CD4-positive, alpha-beta T cell (primary cell): ENCODE measurements at regions of chr2 and their contacts with region 1.

Region 1: DNA sequence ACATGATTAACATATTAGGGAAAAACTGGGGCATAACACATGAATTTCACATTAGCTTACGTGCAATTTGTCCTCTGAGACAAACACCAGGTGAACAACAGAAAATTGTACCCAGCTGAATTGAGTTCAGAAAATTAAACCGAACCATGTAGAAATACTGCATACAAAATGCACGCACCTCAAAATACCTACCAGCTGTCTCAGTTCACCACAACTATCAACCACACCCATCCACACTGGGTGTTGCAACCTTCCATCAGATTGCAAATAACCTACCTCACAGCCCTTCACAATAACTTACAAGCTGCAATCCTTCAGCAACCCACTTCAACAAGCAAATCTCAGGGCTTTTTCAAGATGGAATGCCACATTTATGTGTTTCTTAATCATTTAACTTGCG is 55.9 kb downstream of the UNC50 start:
- DNase-seq: peak in 11 of 14 experiments; percentile 39 to 85 (median 52)
- ATAC-seq: peak; percentile 78
- H3K4me3 ChIP-seq: peak overlapping the region; percentile 44
- H3K4me3 Mint-ChIP-seq: peak overlapping the region; percentile 87
- H3K27ac ChIP-seq: peak overlapping the region; percentile 58 to 76
- H3K27ac Mint-ChIP-seq: peak overlapping the region; percentile 92
- H3K4me1 ChIP-seq: peaks cover 44% of the 10 kb centered on the region
- H3K4me1 Mint-ChIP-seq: peaks cover 78% of the 10 kb centered on the region
- H3K27me3 ChIP-seq: no peaks in the 10 kb centered on the region
- H3K27me3 Mint-ChIP-seq: no peaks in the 10 kb centered on the region
- CTCF ChIP-seq: no peak

Region 2: GRCh38 chr2:97995734-97996624 is 668.3 kb before region 1 on chr2 and contains the start of gene TMEM131:
- CTCF ChIA-PET with region 1: no interaction called
- POLR2A ChIA-PET with region 1: no interaction called
- intact Hi-C with region 1: no loop called
- DNase-seq: peak; percentile 90 to 97 (median 96)
- ATAC-seq: peak; percentile 87
- H3K4me3 ChIP-seq: peak within 1 kb of the TSS; percentile 70
- H3K4me3 Mint-ChIP-seq: peak within 1 kb of the TSS; percentile 94
- H3K27ac ChIP-seq: peak within 1 kb of the TSS; percentile 88 to 93
- H3K27ac Mint-ChIP-seq: peak within 1 kb of the TSS; percentile 86
- H3K4me1 ChIP-seq: peaks cover 17% of the 10 kb centered on the region
- H3K4me1 Mint-ChIP-seq: peaks cover 45% of the 10 kb centered on the region
- H3K27me3 ChIP-seq: no peaks in the 10 kb centered on the region
- H3K27me3 Mint-ChIP-seq: no peaks in the 10 kb centered on the region
- CTCF ChIP-seq: no peak
- total RNA-seq, gene TMEM131: 29.2 to 33.6 TPM

Region 3: DNA sequence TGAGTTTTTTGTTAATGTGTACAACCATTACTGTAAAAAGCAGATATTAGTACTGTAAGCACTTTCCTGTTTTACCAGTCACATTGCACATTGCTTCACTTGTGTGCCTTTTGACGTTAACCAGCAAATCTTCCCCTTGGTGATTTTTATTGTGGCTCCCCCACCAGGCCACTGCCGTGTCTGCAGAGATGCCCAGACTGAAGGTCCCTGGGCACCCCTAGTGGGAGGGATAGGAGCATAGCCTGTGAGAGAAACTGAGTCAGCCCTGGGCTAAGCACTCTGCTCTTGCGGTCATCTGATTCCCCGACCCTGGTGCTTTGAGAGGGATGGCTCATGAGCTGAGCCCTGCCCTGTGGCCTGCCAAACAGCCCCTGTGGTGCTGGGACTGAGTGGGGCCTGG is 146.2 kb before region 1 on chr2:
- CTCF ChIA-PET with region 1: no interaction called
- POLR2A ChIA-PET with region 1: no interaction called
- intact Hi-C with region 1: no loop called
- DNase-seq: peak; percentile 36 to 81 (median 58)
- ATAC-seq: peak; percentile 94
- H3K4me3 ChIP-seq: no peak overlapping the region
- H3K4me3 Mint-ChIP-seq: no peak overlapping the region
- H3K27ac ChIP-seq: no peak overlapping the region
- H3K27ac Mint-ChIP-seq: peak overlapping the region; percentile 61
- H3K4me1 ChIP-seq: peaks cover 46% of the 10 kb centered on the region
- H3K4me1 Mint-ChIP-seq: peaks cover 63% of the 10 kb centered on the region
- H3K27me3 ChIP-seq: no peaks in the 10 kb centered on the region
- H3K27me3 Mint-ChIP-seq: no peaks in the 10 kb centered on the region
- CTCF ChIP-seq: peak; percentile 87

Region 4: GRCh38 chr2:98676742-98677141 is 12.4 kb after region 1 on chr2:
- CTCF ChIA-PET with region 1: interaction called, 16 read pairs
- POLR2A ChIA-PET with region 1: interaction called, 17 read pairs
- intact Hi-C with region 1: no loop called
- DNase-seq: no peak
- ATAC-seq: no peak
- H3K4me3 ChIP-seq: no peak overlapping the region
- H3K4me3 Mint-ChIP-seq: no peak overlapping the region
- H3K27ac ChIP-seq: no peak overlapping the region
- H3K27ac Mint-ChIP-seq: peak overlapping the region; percentile 64
- H3K4me1 ChIP-seq: peaks cover 6% of the 10 kb centered on the region
- H3K4me1 Mint-ChIP-seq: peaks cover 65% of the 10 kb centered on the region
- H3K27me3 ChIP-seq: no peaks in the 10 kb centered on the region
- H3K27me3 Mint-ChIP-seq: no peaks in the 10 kb centered on the region
- CTCF ChIP-seq: no peak

Region 5: GRCh38 chr2:98685930-98686887 is 21.9 kb after region 1 on chr2:
- CTCF ChIA-PET with region 1: interaction called, 3 read pairs
- POLR2A ChIA-PET with region 1: interaction called, 10 read pairs
- intact Hi-C with region 1: no loop called
- DNase-seq: no peak
- ATAC-seq: no peak
- H3K4me3 ChIP-seq: no peak overlapping the region
- H3K4me3 Mint-ChIP-seq: no peak overlapping the region
- H3K27ac ChIP-seq: peak overlapping the region in 1 of 2 donors; percentile 3
- H3K27ac Mint-ChIP-seq: peak overlapping the region; percentile 92
- H3K4me1 ChIP-seq: peaks cover 39% of the 10 kb centered on the region
- H3K4me1 Mint-ChIP-seq: peaks cover 90% of the 10 kb centered on the region
- H3K27me3 ChIP-seq: no peaks in the 10 kb centered on the region
- H3K27me3 Mint-ChIP-seq: no peaks in the 10 kb centered on the region
- CTCF ChIP-seq: no peak

Region 6: DNA sequence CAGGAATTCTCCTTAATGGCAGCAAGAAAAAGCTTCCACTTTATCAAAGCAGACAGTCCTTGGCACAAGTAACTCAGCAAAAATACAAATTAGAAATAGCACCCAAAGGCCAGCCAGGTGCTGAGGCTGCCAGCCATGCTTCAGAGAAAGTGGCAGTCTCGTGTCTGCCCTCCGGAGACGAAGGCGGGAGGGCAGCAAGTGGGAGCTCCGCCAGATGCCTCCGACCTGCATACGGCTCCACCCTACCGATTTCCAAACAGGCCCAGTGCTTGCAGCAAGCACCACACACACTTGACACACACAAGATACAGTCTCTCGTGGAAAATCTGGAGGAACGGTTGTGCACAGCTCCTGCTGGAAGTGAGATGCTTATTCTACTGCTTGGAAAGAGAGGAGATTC is 960.4 kb after region 1 on chr2:
- CTCF ChIA-PET with region 1: no interaction called
- POLR2A ChIA-PET with region 1: no interaction called
- intact Hi-C with region 1: no loop called
- DNase-seq: no peak
- ATAC-seq: no peak
- H3K4me3 ChIP-seq: no peak overlapping the region
- H3K4me3 Mint-ChIP-seq: no peak overlapping the region
- H3K27ac ChIP-seq: no peak overlapping the region
- H3K27ac Mint-ChIP-seq: no peak overlapping the region
- H3K4me1 ChIP-seq: no peaks in the 10 kb centered on the region
- H3K4me1 Mint-ChIP-seq: no peaks in the 10 kb centered on the region
- H3K27me3 ChIP-seq: no peaks in the 10 kb centered on the region
- H3K27me3 Mint-ChIP-seq: no peaks in the 10 kb centered on the region
- CTCF ChIP-seq: no peak